T-cell (primary cell): ENCODE measurements at regions of chr13 and their contacts with region 1.

Region 1: GRCh38 chr13:114224201-114224600 is 10.5 kb upstream of the CDC16 start:
- DNase-seq: no peak
- ATAC-seq: no peak
- H3K4me3 ChIP-seq: no peak overlapping the region
- H3K4me3 Mint-ChIP-seq: peak overlapping the region in 1 of 3 donors; percentile 65
- H3K27ac ChIP-seq: peak overlapping the region; percentile 17
- H3K27ac Mint-ChIP-seq: peak overlapping the region; percentile 86 to 93
- H3K4me1 ChIP-seq: peaks cover 28 to 56% of the 10 kb centered on the region in 2 experiments
- H3K4me1 Mint-ChIP-seq: peaks cover 68 to 74% (median 70%) of the 10 kb centered on the region in 3 donors
- H3K27me3 ChIP-seq: peaks cover 0 to 4% of the 10 kb centered on the region in 2 experiments
- H3K27me3 Mint-ChIP-seq: no peaks in the 10 kb centered on the region

Region 2: GRCh38 chr13:113489171-113489548 is 735.0 kb before region 1 on chr13:
- CTCF ChIA-PET with region 1: no interaction called
- POLR2A ChIA-PET with region 1: no interaction called
- DNase-seq: no peak
- ATAC-seq: no peak
- H3K4me3 ChIP-seq: no peak overlapping the region
- H3K4me3 Mint-ChIP-seq: peak overlapping the region; percentile 86 to 89 (median 87)
- H3K27ac ChIP-seq: no peak overlapping the region
- H3K27ac Mint-ChIP-seq: peak overlapping the region in 1 of 2 donors; percentile 29
- H3K4me1 ChIP-seq: peaks cover 9 to 26% of the 10 kb centered on the region in 2 experiments
- H3K4me1 Mint-ChIP-seq: peaks cover 45 to 64% (median 62%) of the 10 kb centered on the region in 3 donors
- H3K27me3 ChIP-seq: no peaks in the 10 kb centered on the region
- H3K27me3 Mint-ChIP-seq: no peaks in the 10 kb centered on the region

Region 3: DNA sequence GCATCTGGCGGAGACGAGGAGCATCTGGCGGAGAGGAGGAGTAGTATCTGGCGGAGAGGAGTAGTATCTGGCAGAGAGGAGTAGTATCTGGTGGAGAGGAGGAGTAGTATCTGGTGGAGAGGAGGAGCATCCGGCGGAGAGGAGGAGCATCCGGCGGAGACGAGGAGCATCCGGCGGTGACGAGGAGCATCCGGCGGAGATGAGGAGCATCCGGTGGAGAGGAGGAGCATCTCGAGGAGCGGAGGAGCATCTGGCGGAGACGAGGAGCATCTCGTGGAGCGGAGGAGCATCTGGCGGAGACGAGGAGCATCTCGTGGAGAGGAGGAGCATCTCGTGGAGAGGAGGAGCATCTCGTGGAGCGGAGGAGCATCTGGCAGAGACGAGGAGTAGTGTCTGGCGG is 269.0 kb before region 1 on chr13:
- CTCF ChIA-PET with region 1: no interaction called
- POLR2A ChIA-PET with region 1: interaction called in 1 of 2 experiments, 16 read pairs
- DNase-seq: no peak
- ATAC-seq: no peak
- H3K4me3 ChIP-seq: no peak overlapping the region
- H3K4me3 Mint-ChIP-seq: no peak overlapping the region
- H3K27ac ChIP-seq: no peak overlapping the region
- H3K27ac Mint-ChIP-seq: no peak overlapping the region
- H3K4me1 ChIP-seq: peaks cover 0 to 18% of the 10 kb centered on the region in 2 experiments
- H3K4me1 Mint-ChIP-seq: peaks cover 3 to 14% (median 13%) of the 10 kb centered on the region in 3 donors
- H3K27me3 ChIP-seq: no peaks in the 10 kb centered on the region
- H3K27me3 Mint-ChIP-seq: no peaks in the 10 kb centered on the region

Region 4: DNA sequence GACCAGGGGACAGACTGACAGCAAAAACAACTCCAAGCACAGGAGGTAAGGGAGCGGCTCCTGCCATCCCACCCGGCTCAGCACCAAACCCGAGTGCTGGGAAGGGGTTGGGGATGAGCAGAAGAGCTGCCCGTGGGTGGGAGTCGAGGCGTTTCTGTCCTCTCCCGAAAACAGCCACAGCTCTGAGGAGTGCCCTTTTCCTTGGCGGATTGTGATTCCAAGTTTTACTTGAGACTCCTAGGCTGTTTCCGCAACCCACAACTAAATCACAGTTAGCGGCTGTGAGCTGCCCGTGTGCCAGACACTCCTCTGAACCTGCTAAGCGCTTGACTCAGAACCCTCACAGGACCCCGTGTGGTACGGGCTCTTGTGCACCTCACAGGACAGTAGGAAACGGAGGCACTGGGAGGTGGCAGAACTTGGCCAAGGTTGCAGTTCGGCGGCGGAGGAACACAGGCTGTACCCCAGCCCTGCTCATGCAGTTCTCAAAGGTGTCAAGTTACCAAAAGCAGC is 23.7 kb before region 1 on chr13:
- CTCF ChIA-PET with region 1: no interaction called
- POLR2A ChIA-PET with region 1: no interaction called
- DNase-seq: no peak
- ATAC-seq: no peak
- H3K4me3 ChIP-seq: peak overlapping the region in 1 of 2 donors; percentile 11
- H3K4me3 Mint-ChIP-seq: no peak overlapping the region
- H3K27ac ChIP-seq: no peak overlapping the region
- H3K27ac Mint-ChIP-seq: peak overlapping the region in 1 of 2 donors; percentile 34
- H3K4me1 ChIP-seq: peaks cover 0 to 22% of the 10 kb centered on the region in 2 experiments
- H3K4me1 Mint-ChIP-seq: peaks cover 34 to 42% (median 40%) of the 10 kb centered on the region in 3 donors
- H3K27me3 ChIP-seq: peaks cover 0 to 7% of the 10 kb centered on the region in 2 experiments
- H3K27me3 Mint-ChIP-seq: no peaks in the 10 kb centered on the region